ENCODE measurements at regions of chr1 and their contacts with region 1.

Region 1: GRCh38 chr1:100249537-100250257 is at the start of gene DBT:
- DNase-seq: peak; percentile 95
- H3K4me3 ChIP-seq: peak within 1 kb of the TSS; percentile 20 to 63 (median 63)
- H3K27ac ChIP-seq: peak within 1 kb of the TSS; percentile 26
- H3K4me1 ChIP-seq: peaks cover 10% of the 10 kb centered on the region
- H3K27me3 ChIP-seq: peaks cover 0 to 6% of the 10 kb centered on the region in 2 experiments
- CTCF ChIP-seq: no peak
- POLR2A ChIP-seq: peak; percentile 88
- total RNA-seq, gene DBT: 7.9 and 9.0 TPM in 2 replicates

Region 2: DNA sequence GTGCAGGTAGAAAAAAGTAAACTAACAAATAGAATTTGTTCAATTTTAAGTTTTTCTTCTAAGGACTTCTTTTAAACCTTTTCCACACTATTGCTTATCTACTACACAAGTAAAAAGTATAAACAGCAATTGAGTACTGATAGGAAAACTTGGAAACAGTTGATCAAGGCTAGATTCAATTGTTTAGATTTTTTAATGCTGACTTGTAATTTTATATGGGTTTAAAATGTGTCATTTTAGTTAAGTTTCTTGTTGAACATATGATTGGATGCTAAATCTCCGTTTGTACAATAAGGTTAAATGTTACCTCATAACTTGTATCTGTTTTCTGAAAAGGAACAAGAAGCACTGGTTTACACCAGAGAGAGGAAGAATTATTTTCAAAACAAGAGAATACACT is 122.5 kb before region 1 on chr1:
- CTCF ChIA-PET with region 1: no interaction called
- POLR2A ChIA-PET with region 1: no interaction called
- dilution Hi-C with region 1: no loop called
- intact Hi-C with region 1: no loop called
- DNase-seq: no peak
- H3K4me3 ChIP-seq: no peak overlapping the region
- H3K27ac ChIP-seq: no peak overlapping the region
- H3K4me1 ChIP-seq: peaks cover 14% of the 10 kb centered on the region
- H3K27me3 ChIP-seq: no peaks in the 10 kb centered on the region
- CTCF ChIP-seq: no peak
- POLR2A ChIP-seq: no peak

Region 3: GRCh38 chr1:100265931-100266740 is 16.4 kb after region 1 on chr1 and contains the start of gene RTCA:
- CTCF ChIA-PET with region 1: interaction called, 5 read pairs
- POLR2A ChIA-PET with region 1: no interaction called
- dilution Hi-C with region 1: no loop called
- intact Hi-C with region 1: loop called (anchors 1 kb)
- DNase-seq: peak; percentile 92
- H3K4me3 ChIP-seq: peak within 1 kb of the TSS; percentile 67 to 92 (median 86)
- H3K27ac ChIP-seq: peak within 1 kb of the TSS; percentile 41
- H3K4me1 ChIP-seq: peaks cover 19% of the 10 kb centered on the region
- H3K27me3 ChIP-seq: no peaks in the 10 kb centered on the region
- CTCF ChIP-seq: no peak
- POLR2A ChIP-seq: peak; percentile 90
- total RNA-seq, gene RTCA: 44.8 and 46.6 TPM in 2 replicates

Measured in endothelial cell of umbilical vein (primary cell).